Caki2 (cell line): ENCODE measurements at regions of chr20 and their contacts with region 1.

Region 1: GRCh38 chr20:32079655-32080109 is 27.6 kb downstream of the HCK start:
- DNase-seq: no peak

Region 2: GRCh38 chr20:31943052-31943471 is 136.6 kb before region 1 on chr20:
- in situ Hi-C with region 1: loop called (anchors 10 kb)
- DNase-seq: no peak

Region 3: DNA sequence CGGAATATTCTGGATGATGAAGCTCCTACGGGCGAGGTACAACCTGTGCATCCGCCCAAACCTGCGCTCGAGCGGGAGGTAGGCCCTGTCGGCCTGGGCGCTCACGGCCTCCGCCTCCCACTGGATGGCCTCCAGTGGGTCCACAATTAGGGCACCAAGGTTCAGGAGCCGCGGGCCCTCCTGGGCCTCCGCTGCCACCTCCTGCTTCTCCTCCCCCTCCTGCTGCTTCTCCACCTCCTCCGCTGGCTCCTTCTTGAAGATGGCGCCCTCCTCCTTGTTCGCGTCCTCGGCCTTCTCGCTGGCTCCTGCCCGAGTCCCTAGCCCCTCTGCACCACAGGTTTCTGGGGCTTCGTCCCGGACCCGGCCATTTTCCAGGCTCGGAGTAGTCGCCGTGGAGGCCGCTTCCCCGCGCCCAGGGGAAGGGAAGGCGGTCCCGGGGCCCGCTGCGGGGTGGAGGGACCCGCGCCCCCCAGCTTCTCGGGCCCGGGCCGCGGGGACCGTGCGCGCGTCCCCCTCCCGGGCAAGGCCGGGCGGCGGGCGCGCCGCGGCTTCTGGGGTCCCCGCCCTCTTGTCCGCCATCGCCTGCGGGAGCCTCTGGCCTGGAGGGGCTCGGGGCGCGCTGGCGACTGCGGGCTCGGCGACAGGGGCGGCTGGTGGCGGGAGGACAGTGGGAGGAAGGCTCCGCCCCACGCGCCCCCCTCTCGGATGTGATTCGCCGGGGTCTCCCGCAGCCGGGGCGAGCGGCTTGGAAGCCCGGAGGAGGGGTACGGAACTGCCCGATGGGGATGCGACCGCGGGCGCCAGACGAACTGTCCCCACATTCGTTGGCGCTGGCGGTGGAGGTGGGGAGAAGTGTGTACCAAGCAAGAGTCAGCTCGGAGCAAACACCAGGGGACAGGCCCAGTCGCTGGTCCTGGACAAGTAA is 110.3 kb after region 1 on chr20:
- in situ Hi-C with region 1: no loop called
- DNase-seq: no peak